ENCODE measurements at regions of chr13 and their contacts with region 1.

Region 1: GRCh38 chr13:98445340-98446233 is 131.3 kb downstream of the STK24 start:
- DNase-seq: peak; percentile 79
- H3K4me3 ChIP-seq: no peak overlapping the region
- H3K27ac ChIP-seq: peak overlapping the region; percentile 98
- H3K4me1 ChIP-seq: peaks cover 25% of the 10 kb centered on the region
- H3K27me3 ChIP-seq: no peaks in the 10 kb centered on the region

Region 2: GRCh38 chr13:98390086-98390715 is 55.4 kb before region 1 on chr13:
- in situ Hi-C with region 1: no loop called
- DNase-seq: peak; percentile 32
- H3K4me3 ChIP-seq: no peak overlapping the region
- H3K27ac ChIP-seq: 0 out of 2 replicates have a peak overlapping the region, but pooled peaks have one; percentile 4
- H3K4me1 ChIP-seq: peaks cover 6% of the 10 kb centered on the region
- H3K27me3 ChIP-seq: no peaks in the 10 kb centered on the region

Region 3: GRCh38 chr13:98664924-98665637 is 219.5 kb after region 1 on chr13:
- in situ Hi-C with region 1: loop called (anchors 5 kb)
- DNase-seq: peak; percentile 19
- H3K4me3 ChIP-seq: no peak overlapping the region
- H3K27ac ChIP-seq: no peak overlapping the region
- H3K4me1 ChIP-seq: peaks cover 9% of the 10 kb centered on the region; the same call in 1 of the 2 replicates
- H3K27me3 ChIP-seq: no peaks in the 10 kb centered on the region